Activated B cell treated with CpG ODN at 0.5 μM for 24 hours (primary cell): ENCODE measurements at regions of chr16 and their contacts with region 1.

Region 1: DNA sequence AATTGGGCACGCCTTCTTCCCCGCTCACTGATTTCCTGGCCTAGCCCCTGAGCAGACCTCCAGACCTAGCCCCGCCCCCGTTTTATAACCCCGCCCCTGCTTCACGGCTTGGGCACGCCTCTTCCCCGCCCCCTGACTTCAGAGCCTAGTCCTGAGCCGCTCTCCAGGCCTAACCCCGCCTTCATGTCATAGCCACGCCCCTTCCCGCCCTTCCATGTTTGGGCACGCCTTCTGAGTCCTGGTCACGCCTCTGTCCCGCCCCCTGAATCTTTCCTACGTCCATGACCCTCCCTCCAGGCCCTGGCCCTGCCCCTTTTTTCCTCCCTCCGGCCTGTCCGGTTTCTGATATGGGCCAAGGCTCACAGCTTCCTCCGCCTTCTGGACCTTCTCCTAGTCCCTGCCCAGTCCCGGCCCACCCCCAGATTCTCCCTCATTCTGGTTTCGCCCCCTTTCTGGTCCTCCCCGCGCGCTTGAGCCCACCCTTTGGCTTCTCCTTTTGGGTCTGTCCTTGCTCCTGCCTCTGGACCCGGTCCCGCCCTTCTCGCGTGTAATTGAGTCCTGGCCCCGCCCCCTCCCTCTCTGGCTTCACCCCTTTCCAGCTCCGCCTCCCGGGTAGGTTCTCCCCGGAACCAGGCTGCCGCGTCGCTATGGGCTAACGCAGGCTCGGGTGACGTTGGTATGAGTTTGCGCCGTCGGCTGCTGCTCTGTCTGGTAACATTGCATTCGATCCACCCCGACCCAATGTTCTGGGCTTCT is 15.1 kb upstream of the EEF2K start:
- DNase-seq: peak; percentile 98
- ATAC-seq: peak; percentile 65
- H3K4me3 Mint-ChIP-seq: peak overlapping the region; percentile 95
- H3K27ac Mint-ChIP-seq: peak overlapping the region; percentile 100
- H3K4me1 Mint-ChIP-seq: peaks cover 77% of the 10 kb centered on the region
- H3K27me3 Mint-ChIP-seq: peaks cover 2% of the 10 kb centered on the region
- CTCF ChIP-seq: no peak

Region 2: GRCh38 chr16:21656795-21657768 is 533.9 kb before region 1 on chr16:
- CTCF ChIA-PET with region 1: no interaction called
- POLR2A ChIA-PET with region 1: no interaction called
- intact Hi-C with region 1: loop called (anchors 5 kb)
- DNase-seq: no peak
- ATAC-seq: peak; percentile 79
- H3K4me3 Mint-ChIP-seq: peak overlapping the region; percentile 73
- H3K27ac Mint-ChIP-seq: peak overlapping the region; percentile 86
- H3K4me1 Mint-ChIP-seq: peaks cover 88% of the 10 kb centered on the region
- H3K27me3 Mint-ChIP-seq: no peaks in the 10 kb centered on the region
- CTCF ChIP-seq: peak; percentile 97

Region 3: DNA sequence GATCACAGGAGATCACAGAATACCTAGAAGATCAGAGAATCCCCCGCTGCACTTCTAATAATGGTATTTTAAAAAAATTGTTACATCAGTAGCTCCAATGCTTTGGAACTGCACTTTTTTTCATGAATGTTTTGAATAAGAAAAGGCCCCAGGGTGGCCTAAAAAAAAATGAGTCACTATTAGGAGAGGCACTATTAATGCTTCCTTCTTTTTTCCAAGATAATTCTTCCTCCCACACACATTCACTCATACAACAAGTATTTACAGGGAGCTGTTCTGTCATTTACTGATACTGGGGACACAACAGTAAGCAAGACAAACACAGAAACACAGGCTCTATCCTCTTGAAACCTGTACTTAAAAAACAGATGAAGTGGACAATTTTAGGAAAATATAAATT is 189.4 kb before region 1 on chr16:
- CTCF ChIA-PET with region 1: interaction called, 66 read pairs
- POLR2A ChIA-PET with region 1: interaction called, 45 read pairs
- intact Hi-C with region 1: loop called (anchors 1 kb)
- DNase-seq: no peak
- ATAC-seq: no peak
- H3K4me3 Mint-ChIP-seq: no peak overlapping the region
- H3K27ac Mint-ChIP-seq: no peak overlapping the region
- H3K4me1 Mint-ChIP-seq: peaks cover 10% of the 10 kb centered on the region
- H3K27me3 Mint-ChIP-seq: no peaks in the 10 kb centered on the region
- CTCF ChIP-seq: no peak

Region 4: DNA sequence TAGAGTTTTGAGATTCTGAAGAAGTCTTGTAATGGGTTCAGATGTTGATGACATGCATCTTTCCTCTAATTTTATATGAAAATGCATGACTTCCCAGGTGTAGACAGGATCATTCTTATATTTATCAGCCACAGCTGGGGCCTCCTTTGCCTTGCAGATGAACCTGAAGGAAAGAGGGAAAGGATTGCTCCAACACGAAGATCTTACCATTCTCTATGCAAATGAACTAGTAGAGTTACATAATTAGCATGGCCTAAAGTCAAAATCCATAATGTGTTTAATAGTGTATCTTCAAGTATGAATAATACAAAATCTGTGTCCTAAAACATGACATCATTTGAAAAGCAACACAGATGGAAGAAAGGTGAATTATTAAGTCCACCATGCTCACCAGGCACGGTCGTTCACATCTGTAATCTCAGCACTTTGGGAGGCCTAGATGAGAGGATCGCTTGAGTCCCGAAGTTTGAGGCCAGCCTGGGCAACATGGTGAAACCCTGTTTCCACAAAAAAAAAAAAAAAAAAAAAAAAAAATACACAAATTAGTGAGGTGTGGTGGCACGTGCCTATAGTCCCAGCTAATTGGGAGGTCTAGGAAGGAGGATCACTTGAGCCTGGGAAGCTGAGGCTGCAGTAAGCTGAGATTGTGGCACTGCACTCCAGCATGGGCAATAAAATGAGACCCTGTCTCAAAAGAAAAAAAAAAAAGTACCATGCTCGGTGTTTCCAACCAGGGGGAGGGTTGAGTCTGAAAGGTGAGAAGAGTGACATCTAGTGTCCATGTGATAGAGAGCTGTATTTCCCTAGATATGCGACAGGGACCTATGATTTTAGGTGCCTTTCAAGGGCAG is 92.3 kb before region 1 on chr16:
- CTCF ChIA-PET with region 1: interaction called, 3 read pairs
- POLR2A ChIA-PET with region 1: interaction called, 5 read pairs
- intact Hi-C with region 1: loop called (anchors 2 kb)
- DNase-seq: no peak
- ATAC-seq: peak; percentile 58
- H3K4me3 Mint-ChIP-seq: no peak overlapping the region
- H3K27ac Mint-ChIP-seq: no peak overlapping the region
- H3K4me1 Mint-ChIP-seq: peaks cover 4% of the 10 kb centered on the region
- H3K27me3 Mint-ChIP-seq: peaks cover 17% of the 10 kb centered on the region
- CTCF ChIP-seq: no peak

Region 5: GRCh38 chr16:22141746-22142145 is 49.2 kb before region 1 on chr16:
- CTCF ChIA-PET with region 1: no interaction called
- POLR2A ChIA-PET with region 1: no interaction called
- intact Hi-C with region 1: no loop called
- DNase-seq: no peak
- ATAC-seq: no peak
- H3K4me3 Mint-ChIP-seq: no peak overlapping the region
- H3K27ac Mint-ChIP-seq: no peak overlapping the region
- H3K4me1 Mint-ChIP-seq: no peaks in the 10 kb centered on the region
- H3K27me3 Mint-ChIP-seq: peaks cover 17% of the 10 kb centered on the region
- CTCF ChIP-seq: no peak

Region 6: DNA sequence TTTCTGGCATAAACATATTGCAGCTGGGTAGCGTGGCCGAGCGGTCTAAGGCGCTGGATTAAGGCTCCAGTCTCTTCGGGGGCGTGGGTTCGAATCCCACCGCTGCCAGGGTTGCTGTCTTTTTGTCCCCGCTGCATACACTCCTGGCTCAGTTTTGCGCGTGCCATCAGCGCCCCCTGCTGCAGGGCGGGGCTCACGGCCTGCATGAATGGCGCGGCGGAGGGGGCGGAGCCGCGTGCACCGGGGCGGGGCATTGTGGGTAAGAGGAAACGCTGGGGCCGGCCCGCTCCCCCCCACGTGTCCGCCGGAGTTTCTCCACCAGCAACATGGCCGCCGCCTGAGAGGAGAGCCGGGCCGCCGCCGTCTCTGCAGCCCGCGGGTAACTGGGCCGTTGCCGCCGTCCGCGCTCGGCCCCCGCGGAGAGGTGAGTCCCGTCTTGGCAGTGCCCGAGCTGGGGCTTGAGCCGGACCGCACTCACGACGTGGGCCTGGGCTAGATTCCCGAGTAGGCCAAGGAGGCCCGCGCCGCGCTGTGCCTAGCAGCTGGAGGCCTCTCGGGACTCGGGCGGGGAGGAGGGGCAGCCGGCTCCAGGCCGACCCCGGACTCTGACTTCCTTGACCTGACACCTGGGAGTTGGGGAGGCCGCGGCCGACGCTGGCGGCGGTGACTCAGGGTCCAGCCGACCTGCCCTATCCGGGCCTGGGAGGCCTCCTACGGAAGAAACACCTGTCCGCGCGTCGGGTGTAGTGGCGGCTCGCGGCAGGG is 106.3 kb after region 1 on chr16 and contains the start of gene POLR3E:
- CTCF ChIA-PET with region 1: interaction called, 15 read pairs
- POLR2A ChIA-PET with region 1: interaction called, 53 read pairs
- intact Hi-C with region 1: loop called (anchors 1 kb)
- DNase-seq: peak; percentile 100
- ATAC-seq: peak; percentile 94
- H3K4me3 Mint-ChIP-seq: peak within 1 kb of the TSS; percentile 91
- H3K27ac Mint-ChIP-seq: peak within 1 kb of the TSS; percentile 92
- H3K4me1 Mint-ChIP-seq: peaks cover 45% of the 10 kb centered on the region
- H3K27me3 Mint-ChIP-seq: no peaks in the 10 kb centered on the region
- CTCF ChIP-seq: peak; percentile 57
- total RNA-seq, gene POLR3E: 92.3 and 97.1 TPM in 2 replicates